PC-9 (cell line): ENCODE measurements at regions of chr9 and their contacts with region 1.

Region 1: DNA sequence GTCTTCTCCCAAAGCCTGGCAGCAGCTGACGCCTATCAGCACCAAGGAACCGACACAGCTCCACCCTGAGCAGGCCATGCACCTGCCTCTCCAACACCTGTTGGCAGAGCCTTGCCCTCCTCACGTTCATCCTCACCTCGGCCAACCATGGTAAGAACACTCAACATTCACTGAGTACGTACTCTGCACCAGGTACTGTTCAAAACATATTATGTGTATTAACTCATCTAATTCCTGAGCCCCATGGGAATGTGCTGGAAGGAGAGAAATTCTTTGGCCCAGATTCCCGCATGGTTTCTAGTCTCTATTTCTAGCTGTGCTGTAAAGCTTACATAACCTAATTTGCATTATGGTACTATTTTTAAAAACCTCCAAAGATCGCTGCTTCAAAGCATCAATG is 86.1 kb downstream of the GPR21 start:
- DNase-seq: no peak
- H3K4me3 ChIP-seq: no peak overlapping the region
- H3K27ac ChIP-seq: no peak overlapping the region
- H3K4me1 ChIP-seq: no peaks in the 10 kb centered on the region
- H3K27me3 ChIP-seq: no peaks in the 10 kb centered on the region
- CTCF ChIP-seq: no peak

Region 2: GRCh38 chr9:123251741-123252140 is 132.2 kb after region 1 on chr9:
- CTCF ChIA-PET with region 1: no interaction called
- POLR2A ChIA-PET with region 1: interaction called, 34 read pairs
- intact Hi-C with region 1: no loop called
- DNase-seq: no peak
- H3K4me3 ChIP-seq: no peak overlapping the region
- H3K27ac ChIP-seq: no peak overlapping the region
- H3K4me1 ChIP-seq: 0 out of 2 replicates have a peak, but pooled peaks cover 1% of the 10 kb centered on the region
- H3K27me3 ChIP-seq: no peaks in the 10 kb centered on the region
- CTCF ChIP-seq: no peak

Region 3: GRCh38 chr9:123312306-123312877 is 192.8 kb after region 1 on chr9:
- CTCF ChIA-PET with region 1: no interaction called
- POLR2A ChIA-PET with region 1: no interaction called
- intact Hi-C with region 1: no loop called
- DNase-seq: no peak
- H3K4me3 ChIP-seq: no peak overlapping the region
- H3K27ac ChIP-seq: no peak overlapping the region
- H3K4me1 ChIP-seq: 0 out of 2 replicates have a peak, but pooled peaks cover 3% of the 10 kb centered on the region
- H3K27me3 ChIP-seq: no peaks in the 10 kb centered on the region
- CTCF ChIP-seq: no peak